ENCODE measurements at regions of chr1 and their contacts with region 1.

Region 1: GRCh38 chr1:223123011-223123610 is 19.9 kb downstream of the TLR5 start:
- DNase-seq: no peak

Region 2: GRCh38 chr1:223081181-223081994 is 41.7 kb before region 1 on chr1:
- CTCF ChIA-PET with region 1: interaction called, 11 read pairs
- POLR2A ChIA-PET with region 1: no interaction called
- DNase-seq: peak; percentile 96

Region 3: GRCh38 chr1:223102797-223103533 is 20.1 kb before region 1 on chr1:
- CTCF ChIA-PET with region 1: interaction called, 19 read pairs
- POLR2A ChIA-PET with region 1: no interaction called
- DNase-seq: peak; percentile 30

Region 4: GRCh38 chr1:223133824-223134435 is 10.8 kb after region 1 on chr1:
- CTCF ChIA-PET with region 1: interaction called, 81 read pairs
- POLR2A ChIA-PET with region 1: interaction called, 9 read pairs
- DNase-seq: peak; percentile 97

Region 5: DNA sequence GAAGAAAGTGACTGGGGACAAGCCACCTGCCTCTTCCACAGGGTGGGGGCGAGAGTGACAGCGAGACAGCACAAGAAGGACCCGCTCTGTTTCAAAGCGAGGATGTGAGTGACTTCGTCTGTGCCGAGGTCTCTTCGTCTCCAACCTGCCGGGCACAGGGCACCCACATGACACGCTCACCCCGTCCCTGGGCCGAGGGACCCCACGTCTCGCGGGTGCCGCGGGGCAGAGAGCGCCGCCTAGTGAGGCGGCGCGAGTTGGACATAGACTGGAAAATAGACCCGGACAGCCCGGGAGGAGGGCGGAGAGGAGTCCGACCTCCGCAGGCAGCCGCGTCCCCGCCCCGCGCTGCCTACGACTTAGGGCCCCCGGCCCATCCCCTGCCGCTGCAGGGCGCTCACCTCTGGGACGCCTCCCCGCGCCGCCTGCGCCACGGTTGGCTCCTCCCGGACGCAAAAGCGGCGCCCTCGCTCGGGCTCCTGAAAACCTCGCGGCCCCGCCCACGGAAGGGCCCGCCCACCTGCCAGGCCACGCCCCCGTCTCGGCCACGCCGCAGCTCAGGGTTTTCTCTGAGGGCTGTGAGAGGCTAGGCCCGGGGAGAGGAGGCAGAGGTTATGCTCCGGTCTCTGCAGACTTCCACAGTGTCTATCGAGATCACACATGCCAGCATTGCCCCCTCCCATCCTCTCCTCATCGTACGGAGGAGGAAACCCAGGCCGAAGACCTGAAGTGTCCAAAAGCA is 19.9 kb after region 1 on chr1 and contains the start of gene TLR5:
- CTCF ChIA-PET with region 1: interaction called, 12 read pairs
- POLR2A ChIA-PET with region 1: interaction called, 7 read pairs
- DNase-seq: peak; percentile 97

Measured in HEK293T (cell line).